GM12878 (cell line): ENCODE measurements at regions of chr1 and their contacts with region 1.

Region 1: GRCh38 chr1:40153073-40153770 is 8.0 kb upstream of the RLF start:
- DNase-seq: peak; percentile 59
- ATAC-seq: peak; percentile 85
- H3K4me3 ChIP-seq: peak overlapping the region; percentile 56; the same call in 1 of the 2 replicates
- H3K27ac ChIP-seq: peak overlapping the region; percentile 80
- H3K4me1 ChIP-seq: peaks cover 13% of the 10 kb centered on the region
- H3K27me3 ChIP-seq: no peaks in the 10 kb centered on the region
- CTCF ChIP-seq: peak; percentile 53 to 76 (median 71); a peak in 5 of 6 replicates
- EP300 ChIP-seq: no peak
- POLR2A ChIP-seq: no peak
- RAD21 ChIP-seq: peak; percentile 81

Region 2: GRCh38 chr1:40171036-40171435 is 17.8 kb after region 1 on chr1:
- CTCF ChIA-PET with region 1: interaction called, 15 read pairs
- POLR2A ChIA-PET with region 1: interaction called, 4 read pairs
- RAD21 ChIA-PET with region 1: no interaction called
- SMC1A ChIA-PET with region 1: interaction called, 13 read pairs
- in situ Hi-C with region 1: no loop called
- intact Hi-C with region 1: no loop called
- DNase-seq: no peak
- ATAC-seq: no peak
- H3K4me3 ChIP-seq: no peak overlapping the region
- H3K27ac ChIP-seq: no peak overlapping the region
- H3K4me1 ChIP-seq: no peaks in the 10 kb centered on the region
- H3K27me3 ChIP-seq: no peaks in the 10 kb centered on the region
- CTCF ChIP-seq: no peak
- EP300 ChIP-seq: no peak
- POLR2A ChIP-seq: no peak
- RAD21 ChIP-seq: no peak

Region 3: DNA sequence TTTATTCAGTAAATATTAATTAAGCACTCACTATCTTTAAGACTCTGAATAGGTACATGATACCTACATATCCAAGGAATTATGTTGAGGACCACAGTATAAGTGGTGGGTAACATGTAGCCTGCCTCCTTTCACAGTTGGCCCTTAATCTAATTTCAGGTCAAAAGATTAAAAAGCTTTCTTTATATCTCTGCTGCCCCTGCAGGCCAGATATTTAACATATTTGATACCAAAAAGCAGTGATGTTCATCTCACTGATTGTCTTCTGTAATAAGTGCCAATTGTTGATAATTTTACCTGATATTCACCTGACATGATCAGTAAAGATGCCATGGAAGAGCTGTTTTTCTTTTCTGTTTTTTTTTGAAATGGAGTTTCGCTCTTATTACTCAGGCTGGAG is 44.4 kb after region 1 on chr1:
- CTCF ChIA-PET with region 1: interaction called, 17 read pairs
- POLR2A ChIA-PET with region 1: no interaction called
- RAD21 ChIA-PET with region 1: interaction called, 3 read pairs
- SMC1A ChIA-PET with region 1: interaction called, 11 read pairs
- in situ Hi-C with region 1: no loop called
- intact Hi-C with region 1: no loop called
- DNase-seq: no peak
- ATAC-seq: no peak
- H3K4me3 ChIP-seq: no peak overlapping the region
- H3K27ac ChIP-seq: no peak overlapping the region
- H3K4me1 ChIP-seq: no peaks in the 10 kb centered on the region
- H3K27me3 ChIP-seq: no peaks in the 10 kb centered on the region
- CTCF ChIP-seq: peak in 2 of 3 experiments; percentile 22 to 25; a peak in 3 of 6 replicates
- EP300 ChIP-seq: no peak
- POLR2A ChIP-seq: no peak
- RAD21 ChIP-seq: peak; percentile 27; the same call in 1 of the 2 replicates

Region 4: DNA sequence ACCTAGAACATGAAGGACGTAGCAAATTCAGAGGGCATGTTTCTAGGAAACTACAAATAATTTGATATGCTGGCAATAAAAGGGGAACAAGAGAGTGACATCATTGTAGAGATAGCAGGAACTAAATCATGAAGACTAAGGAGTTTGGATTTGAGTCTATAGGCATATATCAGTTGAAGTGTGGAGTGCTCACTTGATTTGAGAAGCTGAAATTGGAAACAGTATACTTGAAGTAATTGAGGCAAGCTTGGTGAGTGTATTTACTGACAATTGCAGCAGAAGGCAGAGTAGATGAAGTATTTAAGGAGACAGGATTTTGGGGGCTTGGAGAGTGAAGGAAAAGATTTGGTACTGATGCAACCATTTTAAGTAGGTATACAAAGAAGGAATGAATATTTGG is 88.1 kb after region 1 on chr1:
- CTCF ChIA-PET with region 1: interaction called, 33 read pairs
- POLR2A ChIA-PET with region 1: interaction called, 4 read pairs
- RAD21 ChIA-PET with region 1: interaction called, 8 read pairs
- SMC1A ChIA-PET with region 1: interaction called, 13 read pairs
- in situ Hi-C with region 1: no loop called
- intact Hi-C with region 1: no loop called
- DNase-seq: no peak
- ATAC-seq: peak; percentile 41
- H3K4me3 ChIP-seq: no peak overlapping the region
- H3K27ac ChIP-seq: peak overlapping the region; percentile 60
- H3K4me1 ChIP-seq: peaks cover 13% of the 10 kb centered on the region
- H3K27me3 ChIP-seq: no peaks in the 10 kb centered on the region
- CTCF ChIP-seq: no peak
- EP300 ChIP-seq: no peak
- POLR2A ChIP-seq: no peak
- RAD21 ChIP-seq: no peak

Region 5: DNA sequence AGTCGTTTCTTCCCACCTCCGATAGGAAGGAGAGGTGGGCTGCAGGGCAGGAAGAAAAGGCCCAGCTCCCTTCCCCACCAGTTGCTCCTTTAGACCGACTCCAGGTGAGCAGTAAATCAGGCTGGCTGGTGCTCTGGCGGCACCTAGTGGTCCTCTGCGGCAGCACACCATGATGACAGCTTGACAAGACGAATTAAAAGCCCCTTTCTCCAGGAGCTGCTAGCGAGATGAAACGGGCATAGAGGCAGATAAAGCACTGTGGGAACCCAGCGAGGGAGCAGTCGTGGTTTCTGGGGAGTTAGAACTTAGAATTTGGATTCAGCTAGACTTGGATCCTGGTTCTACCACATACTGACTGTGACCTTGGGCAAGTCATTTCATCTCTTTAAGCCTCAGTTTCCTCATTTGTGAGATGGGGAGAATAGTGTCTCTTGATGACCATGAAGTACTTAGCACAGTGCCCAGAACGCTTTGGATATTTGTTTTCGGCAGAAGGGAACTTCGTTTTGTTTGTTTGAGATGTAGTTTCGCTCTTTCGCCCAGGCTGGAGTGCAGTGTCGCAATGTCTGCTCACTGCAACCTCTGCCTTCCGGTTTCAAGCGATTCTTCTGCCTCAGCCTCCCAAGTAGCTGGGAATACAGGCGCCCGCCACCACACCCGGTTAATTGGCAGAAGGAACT is 185.7 kb after region 1 on chr1:
- CTCF ChIA-PET with region 1: interaction called, 332 read pairs
- POLR2A ChIA-PET with region 1: interaction called, 16 read pairs
- RAD21 ChIA-PET with region 1: interaction called, 146 read pairs
- SMC1A ChIA-PET with region 1: interaction called, 182 read pairs
- in situ Hi-C with region 1: loop called (anchors 5 kb)
- intact Hi-C with region 1: loop called (anchors 1 kb)
- DNase-seq: peak; percentile 76
- ATAC-seq: peak; percentile 99
- H3K4me3 ChIP-seq: no peak overlapping the region
- H3K27ac ChIP-seq: no peak overlapping the region
- H3K4me1 ChIP-seq: peaks cover 5% of the 10 kb centered on the region; the same call in 1 of the 2 replicates
- H3K27me3 ChIP-seq: no peaks in the 10 kb centered on the region
- CTCF ChIP-seq: peak; percentile 99; a peak in 5 of 6 replicates
- EP300 ChIP-seq: no peak
- POLR2A ChIP-seq: no peak
- RAD21 ChIP-seq: peak; percentile 98

Region 6: DNA sequence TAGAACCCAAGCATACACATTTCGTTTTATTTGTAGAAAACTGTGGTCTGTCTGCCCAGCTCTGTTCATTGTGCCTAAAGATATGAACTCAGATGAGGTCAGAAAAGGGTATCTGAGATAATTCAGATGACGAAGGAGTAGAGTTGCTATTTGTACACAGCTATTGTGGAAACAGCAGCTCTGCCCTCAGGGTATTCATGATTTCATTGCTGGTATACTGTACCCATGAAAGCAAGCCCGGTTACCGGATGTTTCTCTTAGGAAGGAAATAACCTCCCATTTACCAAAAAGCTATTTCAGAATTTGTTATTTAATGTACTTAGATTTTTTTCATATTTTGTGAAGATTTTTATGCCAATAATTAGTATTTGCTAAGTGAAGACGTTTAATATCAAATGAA is 258.1 kb after region 1 on chr1:
- CTCF ChIA-PET with region 1: interaction called, 13 read pairs
- POLR2A ChIA-PET with region 1: no interaction called
- RAD21 ChIA-PET with region 1: interaction called, 7 read pairs
- SMC1A ChIA-PET with region 1: interaction called, 38 read pairs
- in situ Hi-C with region 1: no loop called
- intact Hi-C with region 1: no loop called
- DNase-seq: no peak
- ATAC-seq: no peak
- H3K4me3 ChIP-seq: no peak overlapping the region
- H3K27ac ChIP-seq: no peak overlapping the region
- H3K4me1 ChIP-seq: no peaks in the 10 kb centered on the region
- H3K27me3 ChIP-seq: no peaks in the 10 kb centered on the region
- CTCF ChIP-seq: no peak
- EP300 ChIP-seq: no peak
- POLR2A ChIP-seq: no peak
- RAD21 ChIP-seq: no peak